ENCODE measurements at regions of chr4 and their contacts with region 1.

Region 1: GRCh38 chr4:130064471-130064870 is 968.5 kb downstream of the C4orf33 start:
- DNase-seq: no peak
- H3K4me3 ChIP-seq: no peak overlapping the region
- H3K27ac ChIP-seq: no peak overlapping the region
- H3K4me1 ChIP-seq: no peaks in the 10 kb centered on the region
- H3K27me3 ChIP-seq: no peaks in the 10 kb centered on the region
- CTCF ChIP-seq: no peak
- EP300 ChIP-seq: no peak
- POLR2A ChIP-seq: no peak

Region 2: DNA sequence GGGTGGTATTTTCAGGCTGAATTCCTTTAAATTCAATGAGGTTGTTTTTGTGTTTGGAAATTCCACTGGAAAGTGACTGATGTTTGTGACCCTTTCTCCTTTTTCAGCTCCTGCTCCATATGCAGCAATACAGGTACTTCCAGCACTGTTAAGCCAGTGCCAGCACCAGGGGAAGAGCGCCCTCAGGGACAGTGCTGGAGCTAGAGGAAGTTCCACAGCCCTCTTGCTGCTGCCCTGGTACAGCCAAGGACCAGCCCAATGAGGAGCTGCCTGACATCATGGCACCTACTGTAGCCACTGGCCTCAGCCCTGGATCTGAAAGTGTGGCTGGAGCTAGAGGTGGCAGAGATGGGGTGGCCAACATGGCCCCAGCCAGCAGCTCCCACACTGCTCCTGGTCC is 931.1 kb before region 1 on chr4:
- in situ Hi-C with region 1: no loop called
- intact Hi-C with region 1: loop called (anchors 5 kb)
- DNase-seq: no peak
- H3K4me3 ChIP-seq: no peak overlapping the region
- H3K27ac ChIP-seq: no peak overlapping the region
- H3K4me1 ChIP-seq: no peaks in the 10 kb centered on the region
- H3K27me3 ChIP-seq: no peaks in the 10 kb centered on the region
- CTCF ChIP-seq: no peak
- EP300 ChIP-seq: no peak
- POLR2A ChIP-seq: no peak

Measured in transverse colon (tissue), 4 donors.